Dorsolateral prefrontal cortex (tissue), 120 donors: ENCODE measurements at regions of chr11 and their contacts with region 1.

Region 1: DNA sequence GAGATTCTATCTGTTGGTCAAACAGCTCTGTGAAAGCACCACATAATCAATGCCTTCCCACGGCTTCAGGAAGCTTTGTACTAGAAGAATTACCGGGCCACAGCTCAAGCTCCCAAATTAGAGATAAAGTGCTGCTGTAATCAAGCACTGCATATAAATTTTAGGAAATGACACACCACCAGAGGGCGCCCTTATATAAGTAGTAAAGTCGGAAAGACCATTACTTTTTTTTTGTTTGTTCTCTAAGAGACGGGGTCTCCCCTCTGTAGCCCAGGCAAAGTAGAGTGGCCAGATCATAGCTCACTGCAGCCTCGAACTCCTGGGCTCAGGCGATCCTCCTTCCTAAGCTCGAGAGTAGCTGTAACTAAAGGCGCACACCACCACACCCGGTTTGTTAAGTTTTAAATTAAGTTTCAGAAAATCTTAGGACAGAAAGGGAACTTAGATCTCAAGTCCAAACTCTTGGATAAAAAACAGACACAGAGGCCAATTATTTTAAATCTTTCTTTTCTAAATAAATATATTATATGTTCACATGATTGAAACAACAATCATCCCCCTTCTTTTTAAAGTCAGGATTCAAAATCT is 32.6 kb downstream of the PRCP start:
- DNase-seq: peak in 5 of 10 donors; percentile 49 to 88 (median 69)
- H3K4me3 ChIP-seq: peak overlapping the region in 30 of 59 donors; percentile 2 to 46 (median 28)
- H3K27ac ChIP-seq: peak overlapping the region in 32 of 59 donors; percentile 2 to 68 (median 38)
- H3K27me3 ChIP-seq: no peaks in the 10 kb centered on the region
- CTCF ChIP-seq: peak; percentile 71 to 93 (median 84)

Region 2: DNA sequence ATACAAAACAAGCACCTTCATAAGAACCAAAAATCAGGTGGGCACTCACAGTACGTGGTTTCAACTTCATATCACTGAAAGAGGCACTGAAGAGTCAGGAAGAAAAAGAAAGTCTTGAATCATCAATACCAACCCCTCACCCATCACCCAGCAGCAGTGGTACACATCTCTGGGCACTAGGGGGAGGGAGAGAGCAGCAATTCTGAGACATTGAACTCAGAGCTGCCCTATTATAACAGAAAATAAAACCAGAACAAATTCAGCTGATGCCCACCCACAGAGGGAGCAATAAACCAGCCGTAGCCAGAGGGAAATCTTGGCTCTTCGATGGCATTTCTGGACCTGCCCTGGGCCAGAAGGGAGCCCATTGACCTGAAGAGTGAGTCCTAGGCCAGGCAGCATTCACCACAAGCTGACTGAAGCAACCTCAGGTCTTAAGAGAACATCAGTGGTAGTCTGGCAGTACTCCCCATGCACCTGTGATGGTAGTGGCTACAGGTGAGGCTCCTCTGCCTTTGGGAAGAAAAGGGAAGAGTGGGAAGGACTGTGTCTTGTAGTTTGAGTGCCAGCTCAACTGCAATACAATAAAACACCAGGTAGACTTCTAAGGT is 91.7 kb before region 1 on chr11:
- intact Hi-C with region 1: loop called in 1 of 2 experiments (anchors 5 kb)
- DNase-seq: peak in 2 of 10 donors; percentile 39 to 42
- H3K4me3 ChIP-seq: no peak overlapping the region
- H3K27ac ChIP-seq: no peak overlapping the region
- H3K27me3 ChIP-seq: no peaks in the 10 kb centered on the region
- CTCF ChIP-seq: peak in 54 of 56 donors; percentile 11 to 68 (median 52)

Region 3: GRCh38 chr11:82883853-82884252 is 16.3 kb after region 1 on chr11:
- intact Hi-C with region 1: no loop called
- DNase-seq: no peak
- H3K4me3 ChIP-seq: no peak overlapping the region
- H3K27ac ChIP-seq: no peak overlapping the region
- H3K27me3 ChIP-seq: no peaks in the 10 kb centered on the region
- CTCF ChIP-seq: no peak

Region 4: DNA sequence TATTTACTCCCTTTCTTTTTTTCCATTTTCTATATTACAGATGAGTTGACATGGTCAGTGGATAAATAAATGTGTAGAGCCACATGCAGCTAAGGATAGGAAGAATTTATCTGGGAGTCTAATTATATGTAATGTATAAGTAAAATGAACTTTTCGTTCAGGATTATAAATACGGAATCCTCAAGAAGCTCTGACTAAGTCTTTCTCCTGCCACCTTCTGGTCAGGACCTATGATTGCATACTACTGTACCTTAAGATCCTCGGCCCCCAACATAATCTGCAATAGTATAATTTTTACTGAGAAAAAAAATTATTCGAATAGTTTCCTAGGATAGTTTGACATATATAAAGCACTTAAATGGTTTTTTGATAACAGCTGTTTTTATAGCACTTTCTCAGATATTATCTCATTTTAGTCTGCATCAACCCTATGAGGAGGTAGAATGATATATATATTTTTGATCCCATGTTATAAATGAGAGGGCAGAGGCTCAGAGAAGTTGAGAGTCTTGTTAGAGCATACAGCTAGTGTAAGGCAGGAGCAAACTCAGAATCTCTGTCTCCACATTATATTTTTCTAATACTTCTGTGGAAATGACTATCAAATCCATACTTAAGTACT is 382.5 kb after region 1 on chr11:
- intact Hi-C with region 1: loop called in 1 of 2 experiments (anchors 5 kb)
- DNase-seq: no peak
- H3K4me3 ChIP-seq: peak overlapping the region in 3 of 59 donors; percentile 7 to 15 (median 11)
- H3K27ac ChIP-seq: no peak overlapping the region
- H3K27me3 ChIP-seq: no peaks in the 10 kb centered on the region
- CTCF ChIP-seq: peak; percentile 47 to 88 (median 76)